Right ventricle myocardium inferior (tissue), 1 donor: ENCODE measurements at regions of chr7 and their contacts with region 1.

Region 1: GRCh38 chr7:30173058-30173897 is 38.5 kb downstream of the MTURN start:
- DNase-seq: peak; percentile 85
- ATAC-seq: peak; percentile 89

Region 2: GRCh38 chr7:30117877-30118276 is 55.4 kb before region 1 on chr7:
- intact Hi-C with region 1: no loop called
- DNase-seq: no peak
- ATAC-seq: no peak

Region 3: GRCh38 chr7:30225863-30226613 is 52.8 kb after region 1 on chr7:
- intact Hi-C with region 1: loop called (anchors 5 kb)
- DNase-seq: peak; percentile 74
- ATAC-seq: peak; percentile 89

Region 4: DNA sequence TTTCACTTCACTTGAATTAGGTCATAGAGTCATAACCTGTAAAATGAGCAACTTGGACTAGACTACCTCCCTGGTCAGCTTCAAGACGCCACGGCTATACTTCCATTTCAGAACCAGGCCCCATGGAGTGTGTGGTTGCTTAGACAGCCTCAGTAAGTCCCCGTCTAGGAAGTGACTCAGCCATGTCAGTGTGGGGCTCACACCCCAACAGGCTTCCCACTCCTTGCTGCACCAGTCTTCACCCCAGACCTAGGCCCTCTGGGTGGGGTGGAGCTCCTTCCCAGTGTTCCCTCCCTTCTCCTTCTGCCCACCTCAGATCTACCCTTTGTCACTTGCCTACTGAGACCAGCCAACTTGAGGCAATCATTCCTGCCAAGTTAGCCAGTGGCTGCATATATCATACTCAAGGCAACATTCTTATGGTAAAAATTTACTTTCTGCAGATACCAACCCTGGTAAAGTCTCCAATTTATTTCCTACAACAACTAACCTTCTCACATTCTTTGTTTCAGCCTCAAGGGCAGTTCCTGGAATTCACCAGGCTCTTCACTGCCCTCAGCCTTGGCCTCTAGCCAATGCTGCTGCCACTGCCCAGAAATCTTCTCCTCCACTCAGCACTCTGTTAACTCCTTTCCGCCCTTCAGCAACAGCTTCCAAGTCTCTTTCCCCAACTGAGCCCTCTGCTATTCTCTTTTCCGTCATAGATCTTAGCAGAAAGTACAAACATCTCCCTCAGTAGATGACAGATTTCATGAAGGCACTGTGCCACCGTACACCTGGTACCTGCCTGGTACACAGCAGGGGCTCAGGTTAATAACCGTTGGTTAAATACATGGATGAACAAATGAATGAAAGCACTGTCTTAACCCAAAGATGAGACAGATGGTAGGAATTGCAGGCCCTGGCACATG is 79.9 kb after region 1 on chr7:
- intact Hi-C with region 1: loop called (anchors 5 kb)
- DNase-seq: peak; percentile 80
- ATAC-seq: peak; percentile 94

Region 5: DNA sequence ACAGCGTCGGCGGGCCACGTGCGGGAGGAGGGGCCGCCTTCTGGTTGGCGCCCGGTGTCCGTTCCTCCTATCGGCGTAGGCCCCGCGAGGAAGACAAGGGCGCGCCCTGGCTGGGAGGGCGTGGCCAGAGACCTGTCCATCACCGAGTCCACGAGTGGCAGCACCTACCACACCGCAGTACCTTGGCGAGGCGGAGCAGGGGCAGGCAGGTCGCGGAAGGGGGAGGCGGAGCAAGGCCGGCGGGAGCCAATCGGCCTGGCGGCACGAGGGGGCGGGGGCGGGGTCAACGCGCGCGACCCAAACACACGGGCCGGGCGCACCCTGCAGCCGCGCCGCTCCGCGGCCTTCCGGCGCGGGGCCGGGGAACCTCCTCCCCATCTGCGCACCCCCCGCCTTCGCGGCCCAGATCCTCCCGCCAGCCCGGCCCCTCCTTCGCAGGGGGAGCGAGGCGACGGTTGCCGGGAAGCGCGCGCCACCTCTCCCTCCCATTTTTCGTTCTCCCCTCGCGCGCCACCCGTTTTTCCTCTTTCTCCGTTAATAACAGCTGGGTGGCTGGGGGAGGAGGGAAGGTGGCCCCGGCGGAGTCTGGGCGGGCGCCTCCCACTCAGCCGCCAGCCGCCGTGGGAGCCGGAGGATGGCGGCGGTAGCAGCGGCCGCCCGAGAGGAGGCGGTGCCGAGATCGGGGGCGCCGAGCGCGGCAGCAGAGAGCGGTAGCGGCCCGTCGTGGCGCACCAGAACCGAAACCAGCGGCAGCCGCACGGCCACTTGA is 111.2 kb after region 1 on chr7 and contains the start of gene ZNRF2:
- intact Hi-C with region 1: loop called (anchors 1 kb)
- DNase-seq: peak; percentile 99
- ATAC-seq: peak; percentile 97
- total RNA-seq, gene ZNRF2: 8.7 TPM